ENCODE measurements at regions of chr1 and their contacts with region 1.

Region 1: GRCh38 chr1:227318003-227318852 is at the start of gene CDC42BPA:
- DNase-seq: peak; percentile 89 to 93 (median 92)
- ATAC-seq: peak; percentile 84 to 95 (median 90)
- H3K4me3 ChIP-seq: peak within 1 kb of the TSS; percentile 76 to 97 (median 89)
- H3K27ac ChIP-seq: peak within 1 kb of the TSS; percentile 92 to 98 (median 96)
- H3K4me1 ChIP-seq: peaks cover 0 to 18% (median 7%) of the 10 kb centered on the region in 12 donors
- H3K27me3 ChIP-seq: peaks cover 0 to 8% (median 0%) of the 10 kb centered on the region in 9 donors
- CTCF ChIP-seq: no peak
- POLR2A ChIP-seq: peak in 1 of 2 donors; percentile 32
- total RNA-seq, gene CDC42BPA: 26.3 to 33.8 (median 30.8) TPM

Region 2: DNA sequence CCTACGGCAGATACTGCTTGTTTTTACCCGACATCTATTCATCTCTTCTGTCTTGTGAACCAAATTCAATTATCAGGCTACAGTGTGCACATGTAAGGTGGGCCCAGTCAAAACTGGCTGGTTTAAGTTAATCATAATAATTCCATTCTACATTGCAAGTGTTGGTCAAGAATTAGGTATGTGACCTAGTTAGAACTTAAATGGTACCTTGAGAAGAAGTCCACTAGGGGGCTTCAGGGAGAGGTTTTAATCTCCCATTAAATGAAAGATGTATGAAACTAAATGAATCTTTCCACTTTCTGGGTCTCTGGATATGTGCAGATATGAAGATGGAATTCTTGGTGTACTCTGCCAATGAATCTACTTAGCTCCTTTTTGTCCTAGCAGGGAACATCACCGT is 187.0 kb before region 1 on chr1:
- intact Hi-C with region 1: loop called in 3 of 10 experiments (anchors 10 kb)
- DNase-seq: no peak
- ATAC-seq: peak in 2 of 4 donors; percentile 41 to 55
- H3K4me3 ChIP-seq: no peak overlapping the region
- H3K27ac ChIP-seq: no peak overlapping the region
- H3K4me1 ChIP-seq: peaks cover 0 to 12% (median 0%) of the 10 kb centered on the region in 12 donors
- H3K27me3 ChIP-seq: no peaks in the 10 kb centered on the region
- CTCF ChIP-seq: peak; percentile 30 to 66 (median 50)
- POLR2A ChIP-seq: no peak

Region 3: DNA sequence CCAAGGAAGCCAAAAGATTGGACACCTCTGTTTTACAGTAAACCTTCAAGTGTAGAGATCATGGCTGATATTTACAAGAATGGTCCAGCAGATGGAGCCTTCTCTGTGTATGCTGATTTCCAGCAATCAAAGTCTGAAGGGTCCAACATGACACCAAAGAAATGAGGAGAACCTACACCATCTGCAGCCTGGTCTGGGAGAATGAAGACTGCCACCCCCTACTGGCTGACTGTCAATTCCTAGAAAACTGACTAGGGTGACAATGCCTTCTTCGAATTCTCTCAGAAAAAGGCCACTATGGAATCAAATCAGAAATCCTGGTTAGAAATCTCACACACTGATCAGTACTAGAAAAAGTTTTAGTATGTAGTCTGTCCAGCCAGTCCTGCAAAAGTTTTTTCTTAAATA is 83.2 kb before region 1 on chr1:
- intact Hi-C with region 1: loop called in 7 of 10 experiments (anchors 5 to 10 kb)
- DNase-seq: peak in 1 of 5 donors; percentile 18
- ATAC-seq: peak in 3 of 4 donors; percentile 55 to 82 (median 68)
- H3K4me3 ChIP-seq: no peak overlapping the region
- H3K27ac ChIP-seq: no peak overlapping the region
- H3K4me1 ChIP-seq: peaks cover 0 to 17% (median 5%) of the 10 kb centered on the region in 12 donors
- H3K27me3 ChIP-seq: no peaks in the 10 kb centered on the region
- CTCF ChIP-seq: peak; percentile 26 to 60 (median 40)
- POLR2A ChIP-seq: no peak

Region 4: GRCh38 chr1:227357171-227357880 is 39.1 kb after region 1 on chr1:
- intact Hi-C with region 1: loop called in 4 of 10 experiments (anchors 1 to 5 kb)
- DNase-seq: peak; percentile 72 to 90 (median 78)
- ATAC-seq: peak; percentile 93 to 99 (median 98)
- H3K4me3 ChIP-seq: no peak overlapping the region
- H3K27ac ChIP-seq: peak overlapping the region; percentile 49 to 85 (median 75)
- H3K4me1 ChIP-seq: peaks cover 0 to 28% (median 19%) of the 10 kb centered on the region in 12 donors
- H3K27me3 ChIP-seq: no peaks in the 10 kb centered on the region
- CTCF ChIP-seq: peak in 1 of 12 donors; percentile 7
- POLR2A ChIP-seq: no peak

Region 5: DNA sequence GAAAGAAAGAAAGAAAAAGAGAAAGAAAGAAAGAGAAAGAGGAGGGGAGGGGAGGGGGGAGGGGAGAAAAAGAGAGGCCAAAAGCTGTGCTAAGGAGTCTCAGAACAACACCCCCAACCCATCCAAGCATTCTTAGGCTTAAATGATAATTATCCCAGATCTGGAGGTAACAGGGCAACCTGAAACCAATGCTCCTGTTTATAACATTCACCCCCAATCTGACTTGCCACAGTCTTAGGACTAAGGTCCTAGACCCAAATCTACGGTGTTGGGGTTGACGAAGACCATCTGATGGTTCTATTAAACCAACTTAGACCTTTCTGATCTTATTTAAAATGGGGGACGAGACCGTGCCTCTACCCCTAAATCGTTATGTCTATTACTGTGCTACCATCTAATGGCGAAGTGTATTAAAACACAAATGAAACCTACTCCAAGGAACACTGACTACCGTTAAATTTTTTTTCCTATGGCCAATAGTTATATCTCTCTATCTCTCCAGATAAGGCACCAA is 119.3 kb after region 1 on chr1:
- intact Hi-C with region 1: loop called in 6 of 10 experiments (anchors 2 to 10 kb)
- DNase-seq: no peak
- ATAC-seq: peak; percentile 26 to 81 (median 72)
- H3K4me3 ChIP-seq: peak overlapping the region in 10 of 12 donors; percentile 31 to 59 (median 38)
- H3K27ac ChIP-seq: peak overlapping the region in 2 of 12 donors; percentile 31 to 51
- H3K4me1 ChIP-seq: peaks cover 0 to 69% (median 30%) of the 10 kb centered on the region in 12 donors
- H3K27me3 ChIP-seq: no peaks in the 10 kb centered on the region
- CTCF ChIP-seq: peak; percentile 22 to 74 (median 56)
- POLR2A ChIP-seq: no peak